ENCODE measurements at regions of chr1 and their contacts with region 1.

Region 1: DNA sequence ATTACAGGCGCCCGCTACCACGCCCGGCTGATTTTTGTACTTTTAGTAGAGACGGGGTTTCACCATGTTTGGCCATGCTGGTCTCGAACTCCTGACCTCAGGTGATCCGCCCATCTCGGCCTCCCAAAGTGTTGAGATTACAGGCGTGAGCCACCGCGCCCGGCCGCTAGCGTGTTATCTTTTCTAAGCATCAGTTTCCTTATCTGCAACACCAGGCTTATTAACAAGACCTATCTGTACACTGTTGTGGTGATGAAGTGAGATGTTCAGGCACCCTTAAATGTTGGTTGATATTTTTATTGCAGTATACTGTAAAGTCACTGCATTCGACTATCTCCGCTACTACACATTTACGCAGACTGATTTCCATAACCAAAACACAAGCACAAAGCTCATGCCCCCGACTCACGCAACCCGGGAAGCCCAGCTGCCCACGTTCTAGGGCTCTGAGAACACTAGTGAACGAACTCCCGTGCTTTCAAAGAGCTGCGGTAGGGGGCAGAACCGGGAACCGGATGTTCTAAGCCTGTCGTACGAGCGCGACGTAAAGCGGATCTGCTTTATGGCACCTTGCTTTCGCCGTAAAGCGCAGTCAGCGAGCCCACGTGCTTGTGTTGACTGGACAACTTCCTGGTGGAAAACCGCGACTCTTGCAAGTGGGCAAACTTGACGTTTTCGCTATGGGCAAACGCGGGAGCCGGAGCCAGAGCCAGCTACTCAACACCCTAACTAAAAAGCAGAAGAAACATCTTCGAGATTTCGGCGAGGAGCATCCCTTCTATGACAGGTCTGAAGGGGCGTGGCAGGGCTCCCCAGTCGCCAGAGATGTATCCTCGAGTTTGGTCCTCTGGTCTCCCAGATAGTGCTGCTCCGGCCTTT is at the start of gene UTP25:
- DNase-seq: peak; percentile 99
- H3K4me3 ChIP-seq: peak within 1 kb of the TSS; percentile 73 to 85 (median 81)
- H3K27ac ChIP-seq: peak within 1 kb of the TSS; percentile 91
- H3K4me1 ChIP-seq: peaks cover 58% of the 10 kb centered on the region
- H3K27me3 ChIP-seq: no peaks in the 10 kb centered on the region
- CTCF ChIP-seq: peak; percentile 71 to 80
- POLR2A ChIP-seq: peak; percentile 84
- total RNA-seq, gene UTP25: 10.5 and 11.7 TPM in 2 replicates

Region 2: GRCh38 chr1:209747580-209748262 is 79.9 kb before region 1 on chr1:
- CTCF ChIA-PET with region 1: interaction called, 11 read pairs
- POLR2A ChIA-PET with region 1: no interaction called
- dilution Hi-C with region 1: no loop called
- intact Hi-C with region 1: loop called (anchors 1 kb)
- DNase-seq: peak; percentile 93
- H3K4me3 ChIP-seq: no peak overlapping the region
- H3K27ac ChIP-seq: no peak overlapping the region
- H3K4me1 ChIP-seq: no peaks in the 10 kb centered on the region
- H3K27me3 ChIP-seq: peaks cover 0 to 5% of the 10 kb centered on the region in 2 experiments
- CTCF ChIP-seq: peak; percentile 80 to 97
- POLR2A ChIP-seq: no peak

Region 3: GRCh38 chr1:209784265-209785169 is 43.1 kb before region 1 on chr1 and contains the start of gene C1orf74:
- CTCF ChIA-PET with region 1: interaction called, 15 read pairs
- POLR2A ChIA-PET with region 1: interaction called, 9 read pairs
- dilution Hi-C with region 1: no loop called
- intact Hi-C with region 1: loop called (anchors 1 kb)
- DNase-seq: peak; percentile 99
- H3K4me3 ChIP-seq: peak within 1 kb of the TSS; percentile 62 to 90 (median 75)
- H3K27ac ChIP-seq: peak within 1 kb of the TSS; percentile 74
- H3K4me1 ChIP-seq: peaks cover 10% of the 10 kb centered on the region
- H3K27me3 ChIP-seq: no peaks in the 10 kb centered on the region
- CTCF ChIP-seq: no peak
- POLR2A ChIP-seq: peak; percentile 97
- total RNA-seq, gene C1orf74: 2.3 and 3.0 TPM in 2 replicates

Region 4: DNA sequence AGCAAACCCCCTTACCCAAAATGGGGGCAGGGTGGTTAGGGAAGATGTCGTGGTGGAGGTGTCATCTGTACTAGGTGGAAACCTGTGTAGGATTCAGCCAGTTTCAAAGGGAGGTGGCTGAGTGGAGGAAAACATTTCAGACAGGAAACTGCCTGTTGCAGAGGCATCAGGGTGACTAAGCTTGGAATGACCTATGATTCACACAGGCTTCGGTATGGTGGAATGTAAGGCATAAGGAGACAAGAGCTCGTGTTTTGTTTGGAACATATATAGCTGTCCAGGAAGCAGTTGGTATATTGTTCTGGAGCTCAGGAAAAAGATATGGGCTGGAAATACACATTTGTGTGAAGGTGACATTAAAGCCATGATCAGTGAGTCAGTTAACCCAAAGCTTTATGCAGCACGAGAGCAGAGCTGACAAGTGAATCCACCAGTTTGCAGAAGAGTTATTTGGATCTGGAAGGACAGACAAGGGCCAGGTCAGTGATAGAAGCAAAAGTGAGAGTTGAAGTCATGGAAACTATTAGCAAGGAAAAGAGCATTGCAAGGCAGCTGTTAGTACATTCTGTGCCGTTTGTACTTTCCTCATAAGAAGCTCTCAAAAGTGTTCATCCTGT is 12.4 kb after region 1 on chr1:
- CTCF ChIA-PET with region 1: interaction called, 59 read pairs
- POLR2A ChIA-PET with region 1: interaction called, 27 read pairs
- dilution Hi-C with region 1: no loop called
- intact Hi-C with region 1: loop called (anchors 1 kb)
- DNase-seq: peak; percentile 99
- H3K4me3 ChIP-seq: peak overlapping the region in 1 of 3 experiments; percentile 2
- H3K27ac ChIP-seq: peak overlapping the region; percentile 80
- H3K4me1 ChIP-seq: peaks cover 61% of the 10 kb centered on the region
- H3K27me3 ChIP-seq: no peaks in the 10 kb centered on the region
- CTCF ChIP-seq: no peak
- POLR2A ChIP-seq: peak; percentile 10

Region 5: GRCh38 chr1:209989525-209989924 is 161.9 kb after region 1 on chr1:
- CTCF ChIA-PET with region 1: interaction called, 10 read pairs
- POLR2A ChIA-PET with region 1: no interaction called
- dilution Hi-C with region 1: no loop called
- intact Hi-C with region 1: loop called (anchors 1 kb)
- DNase-seq: peak; percentile 31
- H3K4me3 ChIP-seq: no peak overlapping the region
- H3K27ac ChIP-seq: no peak overlapping the region
- H3K4me1 ChIP-seq: no peaks in the 10 kb centered on the region
- H3K27me3 ChIP-seq: peaks cover 3 to 14% of the 10 kb centered on the region in 2 experiments
- CTCF ChIP-seq: no peak
- POLR2A ChIP-seq: no peak

Region 6: DNA sequence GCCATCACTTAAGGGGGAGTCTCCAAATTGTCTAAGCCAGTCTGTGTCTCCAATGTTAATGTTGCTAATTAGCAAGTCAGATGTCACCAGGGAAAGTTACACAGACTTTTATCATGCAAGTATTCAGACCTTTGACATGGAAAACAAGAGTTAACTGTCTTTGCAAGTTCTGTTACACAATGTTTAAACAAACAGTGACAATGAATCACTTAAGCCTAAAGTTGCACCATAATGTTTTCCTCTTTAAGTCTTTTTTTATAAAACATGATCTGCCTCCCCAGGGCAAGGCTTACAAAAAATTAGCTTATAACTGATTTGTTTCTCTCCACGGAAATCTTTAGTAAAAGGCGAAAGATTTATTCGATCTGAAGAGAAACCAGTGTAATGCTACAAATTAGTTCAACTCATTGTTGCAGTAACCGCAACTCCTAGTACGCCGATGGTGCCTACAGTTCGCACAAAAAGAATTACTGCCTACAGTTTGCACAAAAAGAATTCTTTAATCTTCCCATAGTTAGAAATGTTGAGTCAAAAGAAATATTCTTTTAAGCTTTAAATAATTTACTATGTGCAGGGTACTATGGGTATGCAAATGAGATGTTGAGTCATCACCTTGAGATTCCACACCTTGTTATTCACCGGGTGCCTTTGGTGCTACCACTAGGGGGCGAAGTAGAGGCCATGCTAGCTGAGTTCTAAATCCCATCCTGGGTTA is 546.4 kb after region 1 on chr1:
- CTCF ChIA-PET with region 1: no interaction called
- POLR2A ChIA-PET with region 1: interaction called, 3 read pairs
- dilution Hi-C with region 1: loop called (anchors 25 kb)
- intact Hi-C with region 1: no loop called
- DNase-seq: peak; percentile 65
- H3K4me3 ChIP-seq: no peak overlapping the region
- H3K27ac ChIP-seq: peak overlapping the region; percentile 94
- H3K4me1 ChIP-seq: peaks cover 7% of the 10 kb centered on the region
- H3K27me3 ChIP-seq: no peaks in the 10 kb centered on the region
- CTCF ChIP-seq: peak; percentile 73 to 97
- POLR2A ChIP-seq: peak; percentile 100